A673 (cell line): ENCODE measurements at regions of chr5 and their contacts with region 1.

Region 1: DNA sequence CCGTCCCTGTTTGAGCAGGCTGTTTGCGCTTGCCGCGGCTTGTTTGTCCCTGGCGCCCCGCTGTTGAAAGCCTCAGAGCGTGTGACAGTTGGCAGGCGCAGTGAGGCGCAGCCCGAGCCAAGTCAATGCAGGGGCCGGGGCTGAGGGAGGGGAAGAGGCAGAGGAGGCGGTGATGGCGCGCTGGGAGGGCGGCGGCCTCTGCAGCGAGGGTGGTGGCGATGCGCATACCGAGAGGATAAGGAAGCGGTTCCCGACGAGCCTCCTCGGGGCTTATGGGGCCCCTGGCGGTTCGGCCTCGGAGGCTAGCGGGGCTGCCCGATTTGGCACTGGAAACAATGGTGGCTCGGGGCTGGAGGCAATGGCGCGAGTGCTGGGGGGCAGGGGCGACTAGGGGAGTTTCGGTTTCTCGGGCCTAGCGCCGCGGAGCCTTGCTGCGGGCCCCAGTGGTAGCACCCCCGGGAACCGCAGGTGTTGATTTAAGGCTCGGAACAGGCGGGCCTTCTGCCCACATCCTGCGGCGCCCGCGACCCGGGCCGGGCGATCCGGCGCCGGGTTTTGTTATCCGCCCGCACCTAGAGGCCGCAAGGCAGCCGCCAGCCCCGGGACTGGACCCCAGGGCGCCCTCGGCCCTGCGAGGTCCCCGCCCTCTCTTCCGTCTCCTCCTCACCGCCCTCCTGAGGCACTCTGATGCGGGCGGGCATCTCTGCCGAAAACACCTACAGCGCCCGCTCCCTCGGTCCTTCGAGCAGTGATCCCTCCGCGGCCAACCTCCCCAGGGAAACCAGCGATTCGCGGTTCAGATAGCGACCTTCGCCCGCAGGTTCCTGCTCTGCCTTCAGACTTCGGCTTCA is 947 bp upstream of the LNPEP start:
- DNase-seq: peak; percentile 93
- H3K4me3 ChIP-seq: peak overlapping the region; percentile 80
- H3K27ac ChIP-seq: peak overlapping the region; percentile 91
- H3K4me1 ChIP-seq: peaks cover 32% of the 10 kb centered on the region
- H3K27me3 ChIP-seq: no peaks in the 10 kb centered on the region
- CTCF ChIP-seq: no peak

Region 2: DNA sequence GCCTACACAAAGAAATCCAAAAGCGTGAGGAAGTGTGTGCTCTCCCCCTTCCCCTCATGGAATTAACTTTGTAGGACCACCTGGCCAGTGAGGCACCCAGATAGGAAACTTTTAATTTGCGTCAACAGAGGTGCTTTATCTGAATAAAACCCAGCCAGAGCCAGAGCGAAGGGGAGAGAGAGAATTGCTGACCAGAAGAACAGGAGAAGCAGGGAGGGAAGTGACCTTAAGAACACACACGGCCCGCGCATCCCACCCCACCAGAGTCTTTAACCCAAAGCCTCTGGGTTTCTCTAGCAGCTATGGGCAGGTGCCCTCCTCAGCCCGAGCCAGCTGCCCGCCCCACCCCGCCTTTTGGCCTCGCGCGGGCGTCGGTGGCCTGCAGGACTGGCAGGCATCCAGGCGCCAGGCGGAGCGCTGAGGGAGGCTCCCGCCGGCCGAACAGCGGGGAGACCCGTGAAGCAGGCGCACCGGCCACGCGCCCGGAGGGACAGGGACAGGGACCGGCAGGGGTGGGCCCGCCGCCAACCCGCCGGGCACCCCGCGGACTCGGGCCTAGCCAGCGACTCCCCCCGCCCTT is 127.8 kb before region 1 on chr5:
- CTCF ChIA-PET with region 1: no interaction called
- POLR2A ChIA-PET with region 1: no interaction called
- intact Hi-C with region 1: loop called (anchors 1 kb)
- DNase-seq: peak; percentile 71
- H3K4me3 ChIP-seq: peak overlapping the region; percentile 73
- H3K27ac ChIP-seq: peak overlapping the region; percentile 96
- H3K4me1 ChIP-seq: peaks cover 5% of the 10 kb centered on the region
- H3K27me3 ChIP-seq: no peaks in the 10 kb centered on the region
- CTCF ChIP-seq: no peak

Region 3: GRCh38 chr5:96876292-96876850 is 58.6 kb before region 1 on chr5 and contains the start of gene ERAP2:
- CTCF ChIA-PET with region 1: no interaction called
- POLR2A ChIA-PET with region 1: no interaction called
- intact Hi-C with region 1: loop called (anchors 5 kb)
- DNase-seq: peak; percentile 36
- H3K4me3 ChIP-seq: peak within 1 kb of the TSS; percentile 46
- H3K27ac ChIP-seq: peak within 1 kb of the TSS; percentile 26
- H3K4me1 ChIP-seq: peaks cover 7% of the 10 kb centered on the region
- H3K27me3 ChIP-seq: no peaks in the 10 kb centered on the region
- CTCF ChIP-seq: no peak
- total RNA-seq, gene ERAP2: 2.0 and 2.6 TPM in 2 replicates